Left cardiac atrium (tissue), 4 donors: ENCODE measurements at regions of chr1 and their contacts with region 1.

Region 1: DNA sequence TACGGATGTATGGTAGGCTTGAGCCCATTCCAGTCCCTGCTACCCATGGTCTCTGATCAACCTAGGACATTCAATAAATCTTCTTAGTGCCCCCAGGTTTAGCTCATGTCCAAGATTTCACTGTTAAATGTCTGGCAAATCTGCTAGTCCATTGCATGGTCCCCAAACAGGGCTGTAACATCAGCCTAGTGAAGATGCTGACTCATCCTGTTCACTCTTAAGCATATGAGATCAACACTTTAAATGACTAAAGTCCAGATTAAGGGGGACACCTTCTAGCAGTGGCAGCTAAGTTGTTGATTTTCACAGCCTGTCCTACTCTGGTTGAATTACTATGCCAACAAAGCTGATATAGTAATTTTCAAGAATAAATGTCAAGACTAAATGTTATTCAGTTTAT is 46.5 kb upstream of the NUF2 start:
- DNase-seq: no peak
- ATAC-seq: no peak

Region 2: GRCh38 chr1:163191301-163191700 is 83.9 kb before region 1 on chr1:
- intact Hi-C with region 1: no loop called
- DNase-seq: no peak
- ATAC-seq: no peak

Region 3: DNA sequence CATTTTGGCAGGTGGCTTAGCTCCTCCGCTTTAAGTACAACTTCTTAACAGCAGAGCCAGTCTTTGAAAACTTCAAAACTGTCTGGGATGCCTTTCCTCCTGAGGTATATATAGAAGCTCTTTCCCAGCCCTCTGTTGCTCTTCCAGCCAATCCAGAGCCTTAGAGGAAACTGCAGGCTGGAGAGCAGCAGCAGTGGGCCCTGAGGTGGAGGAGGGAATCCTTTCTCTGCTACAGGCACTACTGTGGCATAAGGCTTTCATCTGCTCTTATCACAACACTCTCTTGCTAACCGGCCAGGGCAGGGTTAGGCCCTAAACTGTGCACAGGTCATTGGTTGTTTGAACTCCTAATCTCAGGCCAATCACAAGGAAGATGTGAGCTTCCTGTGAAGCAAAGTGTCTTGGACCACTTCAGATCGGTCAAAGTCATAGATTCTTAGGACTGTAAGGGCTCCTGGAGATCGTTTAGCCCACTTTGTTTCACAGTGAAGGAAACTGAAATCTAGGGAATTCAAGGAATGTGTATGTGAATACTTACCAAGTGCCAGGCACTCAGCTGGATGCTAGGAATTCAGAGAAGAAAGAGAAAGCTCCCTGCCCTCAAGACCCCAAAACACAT is 72.3 kb before region 1 on chr1 and contains the start of gene RGS5:
- intact Hi-C with region 1: loop called in 1 of 2 experiments (anchors 2 kb)
- DNase-seq: no peak
- ATAC-seq: peak; percentile 38 to 76
- total RNA-seq, gene RGS5: 215 to 235 TPM

Region 4: DNA sequence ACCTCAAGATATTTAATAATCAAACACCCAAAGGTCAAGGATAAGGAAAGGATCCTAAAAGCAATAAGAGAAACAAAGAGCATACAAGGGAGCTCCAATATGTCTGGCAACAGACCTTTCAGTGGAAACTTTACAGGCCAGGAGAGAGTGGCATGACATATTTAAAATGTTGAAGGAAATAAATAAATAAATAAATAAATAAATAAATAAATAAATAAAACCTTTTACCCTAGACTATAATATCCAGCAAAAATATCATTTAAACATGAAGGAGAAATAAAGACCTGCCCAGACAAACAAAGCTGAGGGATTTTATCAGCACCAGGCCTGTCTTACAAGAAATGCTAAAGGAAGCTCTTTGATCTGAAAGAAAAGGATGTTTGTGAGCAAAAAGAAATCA is 916.0 kb after region 1 on chr1:
- intact Hi-C with region 1: no loop called
- DNase-seq: no peak
- ATAC-seq: no peak